Activated CD4-positive, alpha-beta T cell treated with anti-CD3 and anti-CD28 coated beads for 36 hours (primary cell): ENCODE measurements at regions of chr2 and their contacts with region 1.

Region 1: DNA sequence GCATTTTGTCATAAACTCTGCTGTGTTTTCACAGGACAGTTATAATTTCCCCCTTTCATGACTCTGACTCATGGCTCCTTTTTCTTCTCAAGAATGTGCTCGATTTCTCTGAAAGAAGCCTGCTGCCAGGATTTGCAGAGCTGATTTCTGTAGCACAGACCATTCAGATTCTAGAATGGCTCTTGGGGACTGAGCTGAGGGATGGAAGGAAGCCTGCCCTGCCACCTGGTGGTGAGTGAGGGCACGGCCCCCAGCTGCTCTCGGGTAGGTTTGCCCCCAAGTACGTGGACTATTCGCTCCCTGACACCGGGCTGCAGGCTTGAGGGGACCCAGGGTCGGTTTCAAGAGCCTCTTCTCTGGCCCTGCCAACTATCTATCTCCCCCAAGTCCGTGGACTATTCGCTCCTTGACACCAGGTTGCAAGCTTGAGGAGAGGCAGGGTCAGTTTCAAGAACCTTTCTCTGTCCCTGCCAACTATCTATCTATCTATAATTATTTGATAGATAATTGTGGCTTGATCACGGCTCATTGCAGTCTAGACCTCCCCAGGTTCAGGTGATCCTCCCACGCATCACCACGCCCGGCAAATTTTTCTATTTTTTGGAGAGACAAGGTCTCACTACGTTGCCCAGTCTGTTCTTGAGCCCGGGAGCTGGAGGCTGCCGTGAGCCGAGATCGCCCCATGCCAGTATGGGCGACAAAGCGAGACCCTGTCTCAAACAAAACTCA is 1.4 kb upstream of the SMYD5 start:
- DNase-seq: peak; percentile 89
- ATAC-seq: peak; percentile 79
- H3K4me3 Mint-ChIP-seq: no peak overlapping the region
- H3K27ac Mint-ChIP-seq: no peak overlapping the region
- H3K4me1 Mint-ChIP-seq: peaks cover 32% of the 10 kb centered on the region
- H3K27me3 Mint-ChIP-seq: peaks cover 7% of the 10 kb centered on the region

Region 2: GRCh38 chr2:72887754-72888437 is 324.7 kb before region 1 on chr2:
- CTCF ChIA-PET with region 1: interaction called, 12 read pairs
- POLR2A ChIA-PET with region 1: no interaction called
- intact Hi-C with region 1: no loop called
- DNase-seq: peak; percentile 78
- ATAC-seq: peak; percentile 51
- H3K4me3 Mint-ChIP-seq: peak overlapping the region; percentile 70
- H3K27ac Mint-ChIP-seq: no peak overlapping the region
- H3K4me1 Mint-ChIP-seq: peaks cover 10% of the 10 kb centered on the region
- H3K27me3 Mint-ChIP-seq: peaks cover 53% of the 10 kb centered on the region

Region 3: GRCh38 chr2:73112913-73113633 is 99.5 kb before region 1 on chr2 and contains the start of gene RAB11FIP5:
- CTCF ChIA-PET with region 1: interaction called, 4 read pairs
- POLR2A ChIA-PET with region 1: interaction called, 6 read pairs
- intact Hi-C with region 1: loop called (anchors 1 kb)
- DNase-seq: peak; percentile 87
- ATAC-seq: peak; percentile 84
- H3K4me3 Mint-ChIP-seq: peak within 1 kb of the TSS; percentile 79
- H3K27ac Mint-ChIP-seq: peak within 1 kb of the TSS; percentile 40
- H3K4me1 Mint-ChIP-seq: peaks cover 23% of the 10 kb centered on the region
- H3K27me3 Mint-ChIP-seq: peaks cover 2% of the 10 kb centered on the region
- total RNA-seq, gene RAB11FIP5: 16.4 to 16.5 TPM

Region 4: DNA sequence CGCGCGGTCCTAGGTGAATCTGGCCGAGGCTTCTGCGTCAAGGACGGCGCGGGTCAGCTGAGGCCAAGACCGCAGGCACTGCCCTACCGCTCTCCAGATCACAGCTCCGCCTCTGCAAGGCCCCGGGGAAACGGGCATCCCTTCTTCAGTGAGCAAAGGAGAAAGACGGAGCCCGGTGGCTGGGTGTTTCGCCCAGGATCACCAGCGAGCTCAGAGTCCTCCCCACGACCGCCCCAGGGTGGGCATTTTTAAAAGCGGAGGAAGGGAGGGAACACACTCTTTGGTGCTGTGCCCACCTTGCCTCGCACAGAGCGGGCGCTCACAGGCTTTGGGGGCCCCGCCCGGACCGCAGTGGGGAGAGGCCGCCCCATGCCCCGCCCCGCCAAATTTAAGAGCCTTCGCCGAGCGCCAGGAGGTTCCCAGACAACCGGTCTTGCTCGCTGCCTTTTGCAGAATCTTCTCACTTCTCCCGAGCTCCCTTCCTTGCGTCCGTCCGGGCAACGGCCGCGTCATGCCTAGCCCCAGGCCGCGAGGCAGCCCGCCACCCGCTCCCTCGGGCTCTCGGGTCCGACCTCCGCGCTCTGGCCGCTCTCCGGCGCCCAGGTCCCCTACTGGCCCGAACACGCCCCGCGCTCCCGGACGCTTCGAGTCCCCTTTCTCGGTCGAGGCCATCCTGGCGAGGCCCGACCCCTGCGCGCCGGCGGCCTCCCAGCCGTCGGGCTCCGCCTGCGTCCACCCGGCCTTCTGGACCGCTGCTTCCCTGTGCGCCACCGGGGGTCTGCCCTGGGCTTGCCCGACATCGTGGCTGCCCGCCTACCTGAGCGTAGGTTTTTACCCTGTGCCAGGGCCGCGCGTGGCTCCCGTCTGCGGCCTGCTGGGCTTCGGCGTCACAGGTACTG is 10.2 kb before region 1 on chr2 and contains the start of gene NOTO:
- CTCF ChIA-PET with region 1: interaction called, 11 read pairs
- POLR2A ChIA-PET with region 1: interaction called, 3 read pairs
- intact Hi-C with region 1: no loop called
- DNase-seq: peak; percentile 26
- ATAC-seq: peak; percentile 16
- H3K4me3 Mint-ChIP-seq: no peak within 1 kb of the TSS
- H3K27ac Mint-ChIP-seq: no peak within 1 kb of the TSS
- H3K4me1 Mint-ChIP-seq: peaks cover 4% of the 10 kb centered on the region
- H3K27me3 Mint-ChIP-seq: peaks cover 50% of the 10 kb centered on the region
- total RNA-seq, gene NOTO: not detected

Region 5: DNA sequence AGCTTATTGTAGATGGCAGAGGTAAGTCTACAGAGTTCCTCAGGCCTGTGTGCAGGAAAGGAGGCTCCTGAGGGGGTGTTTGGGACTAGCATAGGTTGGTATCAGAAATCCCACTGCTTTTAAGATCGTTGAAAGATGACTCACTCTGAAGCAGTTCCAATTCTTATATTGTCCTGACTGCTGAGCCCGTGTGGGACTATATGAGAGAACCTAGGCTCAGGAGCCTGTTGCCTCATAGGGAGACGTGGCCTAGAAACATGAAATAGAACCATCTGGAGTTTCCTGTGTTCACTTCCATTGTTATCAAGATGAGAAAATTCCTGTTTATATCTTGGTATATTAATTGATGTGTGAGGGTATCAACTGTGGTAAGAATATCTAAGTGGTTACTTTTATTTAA is 27.2 kb after region 1 on chr2:
- CTCF ChIA-PET with region 1: interaction called, 37 read pairs
- POLR2A ChIA-PET with region 1: interaction called, 8 read pairs
- intact Hi-C with region 1: loop called in 1 of 2 experiments (anchors 1 kb)
- DNase-seq: no peak
- ATAC-seq: no peak
- H3K4me3 Mint-ChIP-seq: no peak overlapping the region
- H3K27ac Mint-ChIP-seq: no peak overlapping the region
- H3K4me1 Mint-ChIP-seq: peaks cover 49% of the 10 kb centered on the region
- H3K27me3 Mint-ChIP-seq: no peaks in the 10 kb centered on the region

Region 6: GRCh38 chr2:73293534-73294171 is 81.0 kb after region 1 on chr2 and contains the start of gene EGR4:
- CTCF ChIA-PET with region 1: interaction called, 10 read pairs
- POLR2A ChIA-PET with region 1: no interaction called
- intact Hi-C with region 1: loop called in 1 of 2 experiments (anchors 1 kb)
- DNase-seq: peak; percentile 95
- ATAC-seq: peak; percentile 96
- H3K4me3 Mint-ChIP-seq: peak within 1 kb of the TSS; percentile 68
- H3K27ac Mint-ChIP-seq: no peak within 1 kb of the TSS
- H3K4me1 Mint-ChIP-seq: peaks cover 12% of the 10 kb centered on the region
- H3K27me3 Mint-ChIP-seq: peaks cover 65% of the 10 kb centered on the region
- total RNA-seq, gene EGR4: 0.18 to 0.41 TPM

Region 7: DNA sequence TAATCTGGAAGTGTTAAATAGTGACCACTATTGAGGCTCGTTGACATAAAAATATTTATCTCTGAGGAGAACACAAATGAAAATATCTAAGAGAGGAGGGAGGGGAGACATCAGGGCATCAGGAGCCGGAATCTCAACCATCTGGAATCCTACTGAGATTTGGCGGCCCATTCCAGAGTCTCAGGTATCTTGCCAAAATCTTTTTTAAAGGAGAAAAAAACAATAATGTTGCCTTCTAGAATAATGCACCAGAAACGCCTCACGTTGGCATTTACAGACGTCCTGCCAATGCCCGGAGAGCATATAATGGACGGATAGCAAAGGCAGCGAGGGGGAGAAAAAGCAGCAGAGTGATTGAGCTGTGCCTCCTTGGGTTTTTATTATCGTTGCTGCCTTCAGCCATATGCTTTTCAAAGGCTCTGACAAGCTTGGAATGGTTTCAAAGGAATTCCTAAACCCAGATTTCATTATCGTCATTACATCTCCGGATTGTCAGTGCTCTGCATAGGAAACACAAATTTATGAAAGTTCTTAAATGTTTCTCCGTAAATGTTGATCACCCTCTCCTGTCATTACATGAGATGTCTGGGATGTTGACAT is 111.6 kb after region 1 on chr2:
- CTCF ChIA-PET with region 1: no interaction called
- POLR2A ChIA-PET with region 1: no interaction called
- intact Hi-C with region 1: no loop called
- DNase-seq: no peak
- ATAC-seq: no peak
- H3K4me3 Mint-ChIP-seq: no peak overlapping the region
- H3K27ac Mint-ChIP-seq: no peak overlapping the region
- H3K4me1 Mint-ChIP-seq: no peaks in the 10 kb centered on the region
- H3K27me3 Mint-ChIP-seq: peaks cover 24% of the 10 kb centered on the region